ENCODE measurements at regions of chrX and their contacts with region 1.

Region 1: DNA sequence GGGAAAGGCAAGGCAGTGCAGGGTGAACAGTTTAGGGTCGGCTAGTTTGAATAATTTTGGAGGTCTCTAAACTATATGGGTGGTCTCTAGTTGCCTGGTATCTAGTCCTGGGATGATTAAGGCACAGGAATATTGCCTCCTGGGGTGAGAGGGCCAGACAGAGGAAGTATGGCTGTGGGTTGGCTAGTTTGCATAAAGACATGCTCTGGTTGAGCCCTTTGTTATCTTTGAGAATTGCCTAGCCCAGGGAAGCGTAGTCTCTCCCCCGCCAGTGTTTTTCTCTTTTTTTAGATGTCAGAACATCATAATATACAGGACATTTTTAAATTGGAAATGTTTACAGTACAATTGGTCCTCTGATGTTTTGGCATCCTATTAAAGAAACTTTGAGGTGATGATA is 163.5 kb downstream of the PWWP3B start:
- DNase-seq: no peak
- ATAC-seq: no peak
- H3K4me3 ChIP-seq: no peak overlapping the region
- H3K27ac ChIP-seq: no peak overlapping the region
- H3K4me1 ChIP-seq: no peaks in the 10 kb centered on the region
- H3K27me3 ChIP-seq: no peaks in the 10 kb centered on the region
- CTCF ChIP-seq: no peak
- POLR2A ChIP-seq: no peak
- RAD21 ChIP-seq: no peak

Region 2: GRCh38 chrX:106341823-106342222 is 10.2 kb after region 1 on chrX:
- CTCF ChIA-PET with region 1: no interaction called
- POLR2A ChIA-PET with region 1: no interaction called
- RAD21 ChIA-PET with region 1: no interaction called
- intact Hi-C with region 1: loop called (anchors 1 kb)
- DNase-seq: peak; percentile 13
- ATAC-seq: no peak
- H3K4me3 ChIP-seq: no peak overlapping the region
- H3K27ac ChIP-seq: no peak overlapping the region
- H3K4me1 ChIP-seq: no peaks in the 10 kb centered on the region
- H3K27me3 ChIP-seq: no peaks in the 10 kb centered on the region
- CTCF ChIP-seq: no peak
- POLR2A ChIP-seq: no peak
- RAD21 ChIP-seq: no peak

Measured in HCT116 (cell line).